Right cardiac atrium (tissue), 5 donors: ENCODE measurements at regions of chr12 and their contacts with region 1.

Region 1: GRCh38 chr12:17866802-17867201 is 223.2 kb downstream of the RERGL start:
- DNase-seq: no peak
- ATAC-seq: no peak
- H3K4me3 ChIP-seq: no peak overlapping the region
- H3K27ac ChIP-seq: no peak overlapping the region
- H3K4me1 ChIP-seq: no peaks in the 10 kb centered on the region
- H3K27me3 ChIP-seq: no peaks in the 10 kb centered on the region

Region 2: DNA sequence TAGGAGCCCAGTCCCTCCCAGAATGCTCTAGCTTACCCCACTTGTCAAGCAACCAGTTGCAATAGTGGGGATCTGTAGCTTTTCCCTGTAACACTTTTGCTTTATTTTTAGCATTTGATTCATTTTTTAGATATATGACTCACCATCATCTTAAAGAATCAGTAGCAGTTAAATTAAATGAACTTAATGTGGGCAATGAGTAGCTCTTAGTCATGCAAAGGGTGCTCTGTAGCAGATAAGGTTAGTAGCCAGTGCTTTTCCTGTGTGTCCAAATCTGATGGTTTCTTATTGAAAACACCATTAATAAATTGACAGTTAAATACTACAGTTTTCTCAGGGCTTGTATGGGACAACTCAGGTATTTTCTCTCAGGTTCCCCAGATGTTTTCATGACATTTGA is 88.6 kb before region 1 on chr12:
- intact Hi-C with region 1: loop called in 3 of 4 experiments (anchors 5 kb)
- DNase-seq: no peak
- ATAC-seq: no peak
- H3K4me3 ChIP-seq: no peak overlapping the region
- H3K27ac ChIP-seq: no peak overlapping the region
- H3K4me1 ChIP-seq: no peaks in the 10 kb centered on the region
- H3K27me3 ChIP-seq: no peaks in the 10 kb centered on the region

Region 3: GRCh38 chr12:17793854-17794253 is 72.9 kb before region 1 on chr12:
- intact Hi-C with region 1: loop called in 1 of 4 experiments (anchors 5 kb)
- DNase-seq: no peak
- ATAC-seq: no peak
- H3K4me3 ChIP-seq: no peak overlapping the region
- H3K27ac ChIP-seq: no peak overlapping the region
- H3K4me1 ChIP-seq: no peaks in the 10 kb centered on the region
- H3K27me3 ChIP-seq: no peaks in the 10 kb centered on the region